ENCODE measurements at regions of chr18 and their contacts with region 1.

Region 1: DNA sequence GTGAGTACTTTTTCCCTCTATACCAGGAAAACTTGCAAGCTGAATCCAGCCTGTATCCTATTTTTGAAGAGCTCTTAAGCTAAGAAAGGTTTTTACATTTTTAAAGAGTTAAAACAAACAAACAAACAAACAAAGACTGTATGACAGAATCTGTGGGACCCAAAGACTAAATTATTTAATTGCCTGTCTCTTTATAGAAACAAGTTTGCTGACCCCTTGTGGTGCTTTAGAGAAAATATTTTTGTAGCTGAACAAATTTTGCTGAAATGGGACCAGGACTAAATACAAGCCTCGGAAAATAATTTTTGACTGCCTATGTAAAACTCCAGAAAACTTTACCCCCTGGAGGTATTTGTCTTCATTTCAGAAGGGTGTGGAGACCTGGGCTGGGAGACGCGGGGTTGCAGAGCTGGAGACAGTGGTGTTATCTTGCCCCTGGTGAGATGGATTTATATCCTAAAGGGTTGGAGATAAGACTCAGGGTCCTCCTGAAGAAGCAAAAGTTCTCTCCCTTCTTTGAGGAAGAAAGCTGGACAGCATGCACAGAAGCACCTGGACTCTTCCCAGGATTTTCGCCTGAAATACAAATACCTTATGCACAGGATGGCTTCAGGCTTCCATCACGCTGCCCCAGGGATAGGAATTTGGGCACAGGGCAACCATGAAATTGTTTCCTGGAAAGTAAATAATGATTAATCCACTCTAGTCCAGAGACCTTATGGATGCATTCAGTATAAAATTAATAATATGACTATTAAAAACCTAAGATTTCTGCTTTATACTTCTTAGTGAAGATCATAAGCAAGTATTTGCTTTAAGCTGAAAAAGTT is 54.3 kb downstream of the TMX3 start:
- DNase-seq: peak; percentile 11
- CTCF ChIP-seq: peak; percentile 48

Region 2: GRCh38 chr18:67217551-67218166 is 1442.9 kb before region 1 on chr18:
- CTCF ChIA-PET with region 1: interaction called, 17 read pairs
- POLR2A ChIA-PET with region 1: no interaction called
- DNase-seq: peak; percentile 31
- CTCF ChIP-seq: peak; percentile 59

Region 3: GRCh38 chr18:68648191-68648590 is 12.4 kb before region 1 on chr18:
- CTCF ChIA-PET with region 1: interaction called, 30 read pairs
- POLR2A ChIA-PET with region 1: no interaction called
- DNase-seq: no peak
- CTCF ChIP-seq: no peak

Region 4: DNA sequence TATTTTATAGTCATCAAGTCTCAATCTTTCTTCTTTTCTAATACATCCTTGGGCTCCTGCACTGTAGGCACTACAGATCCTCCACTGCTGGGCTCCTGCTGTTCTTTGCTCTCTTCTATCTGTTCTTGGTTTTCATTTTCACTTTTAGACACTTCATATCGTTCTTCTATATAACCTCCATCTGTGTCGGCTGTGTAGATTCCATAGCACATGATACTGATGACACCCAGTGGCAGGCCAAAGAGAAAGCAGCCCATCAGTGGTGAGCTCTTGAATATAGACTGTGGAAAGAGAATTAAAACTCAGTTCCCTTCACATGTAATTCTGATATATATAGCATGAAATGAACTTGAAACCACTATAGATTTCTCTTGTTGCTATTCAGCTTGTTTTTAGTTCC is 16.3 kb after region 1 on chr18:
- CTCF ChIA-PET with region 1: interaction called, 13 read pairs
- POLR2A ChIA-PET with region 1: no interaction called
- DNase-seq: no peak
- CTCF ChIP-seq: peak; percentile 23

Measured in GM10248 (cell line).